ENCODE measurements at regions of chr17 and their contacts with region 1.

Region 1: DNA sequence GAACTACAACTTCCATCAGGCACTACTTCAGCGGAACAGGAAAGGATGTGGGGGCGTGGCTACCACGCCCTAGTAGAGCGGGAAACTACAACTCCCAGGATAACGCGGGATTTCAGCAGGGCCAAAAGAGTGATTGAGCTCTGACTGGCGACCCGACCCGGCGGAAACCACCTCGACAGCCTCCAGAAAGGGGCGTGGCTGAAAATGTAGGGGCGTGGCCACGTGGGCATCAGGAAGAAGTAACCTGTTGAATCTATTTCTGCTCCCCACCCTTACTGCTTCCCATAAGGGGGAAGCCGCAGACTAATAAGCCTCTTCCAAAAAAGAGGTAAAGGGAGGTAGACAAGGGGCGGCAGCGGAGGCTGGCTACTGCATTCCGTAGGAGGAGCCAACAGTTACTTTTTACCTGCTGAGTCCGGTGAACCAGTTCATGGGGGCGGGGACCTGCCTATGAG is at the start of gene TMEM102:
- DNase-seq: peak; percentile 98
- ATAC-seq: peak; percentile 65
- H3K4me3 Mint-ChIP-seq: peak within 1 kb of the TSS; percentile 96
- H3K27ac Mint-ChIP-seq: peak within 1 kb of the TSS; percentile 96
- H3K4me1 Mint-ChIP-seq: peaks cover 18% of the 10 kb centered on the region
- H3K27me3 Mint-ChIP-seq: no peaks in the 10 kb centered on the region
- total RNA-seq, gene TMEM102: 15.7 to 17.7 TPM

Region 2: DNA sequence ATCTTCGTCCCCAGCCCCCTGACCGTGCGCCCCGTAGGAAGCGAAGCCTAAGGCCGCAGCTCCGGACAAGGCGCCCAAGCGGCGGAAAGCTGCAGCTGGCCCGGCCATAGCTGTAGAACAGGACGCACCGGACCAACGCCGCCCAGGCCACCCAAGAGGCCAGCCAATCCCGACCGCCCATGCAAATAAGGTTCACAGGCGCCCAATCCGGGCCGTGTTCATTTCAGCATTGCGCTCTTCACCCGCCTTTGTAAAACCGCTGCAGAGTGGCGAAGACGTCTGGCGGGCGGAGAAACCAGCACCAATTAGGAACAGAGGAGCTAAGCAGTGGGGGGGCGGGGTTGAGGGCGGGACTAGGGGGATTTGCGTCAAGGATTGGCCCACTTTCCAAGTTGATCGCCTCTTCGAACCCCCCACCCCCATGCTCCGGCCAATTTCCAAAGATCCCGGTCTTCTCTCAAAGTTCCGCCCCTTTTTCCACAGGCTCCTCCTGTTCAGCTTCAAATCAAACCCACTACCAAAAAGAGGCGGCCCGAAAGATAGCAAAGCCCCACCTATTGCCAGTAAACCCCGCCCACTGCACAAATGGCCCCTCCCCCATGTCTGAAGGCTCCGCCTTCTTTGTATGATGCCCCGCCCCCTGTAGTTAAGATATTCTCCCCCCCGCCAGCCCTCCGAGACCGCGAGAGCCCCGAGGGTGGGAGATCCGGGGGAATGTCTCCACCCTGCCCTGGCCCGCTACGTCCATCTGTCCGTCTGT is 31.1 kb before region 1 on chr17 and contains the start of gene TMEM256:
- POLR2A ChIA-PET with region 1: interaction called, 12 read pairs
- DNase-seq: peak; percentile 90
- ATAC-seq: peak; percentile 95
- H3K4me3 Mint-ChIP-seq: peak within 1 kb of the TSS; percentile 92
- H3K27ac Mint-ChIP-seq: peak within 1 kb of the TSS; percentile 89
- H3K4me1 Mint-ChIP-seq: peaks cover 14% of the 10 kb centered on the region
- H3K27me3 Mint-ChIP-seq: peaks cover 11% of the 10 kb centered on the region
- total RNA-seq, gene TMEM256: 52.9 to 55.6 TPM

Region 3: DNA sequence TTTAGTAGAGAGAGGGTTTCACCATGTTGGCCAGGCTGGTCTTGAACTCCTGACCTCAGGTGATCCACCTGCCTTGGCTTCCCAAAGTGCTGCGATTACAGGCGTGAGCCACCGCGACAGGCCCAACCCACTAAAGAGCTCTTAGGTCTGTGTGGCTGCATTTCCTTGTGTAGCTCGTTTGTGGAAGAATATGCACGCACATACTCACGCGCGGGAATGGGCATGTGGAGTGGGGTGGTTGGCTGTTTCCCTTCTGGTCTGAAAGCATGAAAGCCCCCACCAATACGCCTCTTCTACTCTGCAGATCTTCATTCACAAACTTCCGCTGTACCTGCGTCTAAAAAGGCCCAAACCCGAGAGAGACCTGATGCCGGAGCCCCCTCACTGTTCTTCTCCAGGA is 19.7 kb after region 1 on chr17:
- POLR2A ChIA-PET with region 1: interaction called, 25 read pairs
- DNase-seq: no peak
- ATAC-seq: no peak
- H3K4me3 Mint-ChIP-seq: peak overlapping the region; percentile 90
- H3K27ac Mint-ChIP-seq: peak overlapping the region; percentile 94
- H3K4me1 Mint-ChIP-seq: peaks cover 30% of the 10 kb centered on the region
- H3K27me3 Mint-ChIP-seq: no peaks in the 10 kb centered on the region

Region 4: DNA sequence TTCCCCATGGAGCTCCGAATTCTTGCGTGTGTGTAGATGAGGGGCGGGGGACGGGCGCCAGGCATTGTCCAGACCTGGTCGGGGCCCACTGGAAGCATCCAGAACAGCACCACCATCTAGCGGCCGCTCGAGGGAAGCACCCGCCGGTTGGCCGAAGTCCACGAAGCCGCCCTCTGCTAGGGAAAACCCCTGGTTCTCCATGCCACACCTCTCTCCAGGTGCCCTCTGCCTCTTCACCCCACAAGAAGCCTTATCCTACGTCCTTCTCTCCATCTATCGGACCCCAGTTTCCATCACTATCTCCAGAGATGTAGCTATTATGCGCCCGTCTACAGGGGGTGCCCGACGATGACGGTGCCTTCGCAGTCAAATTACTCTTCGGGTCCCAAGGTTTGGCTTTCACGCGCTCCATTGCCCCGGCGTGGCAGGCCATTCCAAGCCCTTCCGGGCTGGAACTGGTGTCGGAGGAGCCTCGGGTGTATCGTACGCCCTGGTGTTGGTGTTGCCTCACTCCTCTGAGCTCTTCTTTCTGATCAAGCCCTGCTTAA is 125.9 kb after region 1 on chr17:
- POLR2A ChIA-PET with region 1: interaction called, 11 read pairs
- DNase-seq: peak; percentile 85
- ATAC-seq: peak; percentile 54
- H3K4me3 Mint-ChIP-seq: peak overlapping the region; percentile 83
- H3K27ac Mint-ChIP-seq: peak overlapping the region; percentile 87
- H3K4me1 Mint-ChIP-seq: peaks cover 55% of the 10 kb centered on the region
- H3K27me3 Mint-ChIP-seq: no peaks in the 10 kb centered on the region